Activated CD4-positive, alpha-beta T cell treated with anti-CD3 and anti-CD28 coated beads for 36 hours (primary cell): ENCODE measurements at regions of chr17 and their contacts with region 1.

Region 1: GRCh38 chr17:39605492-39606433 is 2.0 kb downstream of the NEUROD2 start:
- DNase-seq: peak; percentile 49
- ATAC-seq: no peak
- H3K4me3 Mint-ChIP-seq: no peak overlapping the region
- H3K27ac Mint-ChIP-seq: no peak overlapping the region
- H3K4me1 Mint-ChIP-seq: peaks cover 21% of the 10 kb centered on the region
- H3K27me3 Mint-ChIP-seq: peaks cover 61% of the 10 kb centered on the region

Region 2: GRCh38 chr17:39538866-39539265 is 66.9 kb before region 1 on chr17:
- CTCF ChIA-PET with region 1: no interaction called
- POLR2A ChIA-PET with region 1: no interaction called
- intact Hi-C with region 1: no loop called
- DNase-seq: no peak
- ATAC-seq: peak; percentile 39
- H3K4me3 Mint-ChIP-seq: no peak overlapping the region
- H3K27ac Mint-ChIP-seq: no peak overlapping the region
- H3K4me1 Mint-ChIP-seq: peaks cover 13% of the 10 kb centered on the region
- H3K27me3 Mint-ChIP-seq: no peaks in the 10 kb centered on the region

Region 3: DNA sequence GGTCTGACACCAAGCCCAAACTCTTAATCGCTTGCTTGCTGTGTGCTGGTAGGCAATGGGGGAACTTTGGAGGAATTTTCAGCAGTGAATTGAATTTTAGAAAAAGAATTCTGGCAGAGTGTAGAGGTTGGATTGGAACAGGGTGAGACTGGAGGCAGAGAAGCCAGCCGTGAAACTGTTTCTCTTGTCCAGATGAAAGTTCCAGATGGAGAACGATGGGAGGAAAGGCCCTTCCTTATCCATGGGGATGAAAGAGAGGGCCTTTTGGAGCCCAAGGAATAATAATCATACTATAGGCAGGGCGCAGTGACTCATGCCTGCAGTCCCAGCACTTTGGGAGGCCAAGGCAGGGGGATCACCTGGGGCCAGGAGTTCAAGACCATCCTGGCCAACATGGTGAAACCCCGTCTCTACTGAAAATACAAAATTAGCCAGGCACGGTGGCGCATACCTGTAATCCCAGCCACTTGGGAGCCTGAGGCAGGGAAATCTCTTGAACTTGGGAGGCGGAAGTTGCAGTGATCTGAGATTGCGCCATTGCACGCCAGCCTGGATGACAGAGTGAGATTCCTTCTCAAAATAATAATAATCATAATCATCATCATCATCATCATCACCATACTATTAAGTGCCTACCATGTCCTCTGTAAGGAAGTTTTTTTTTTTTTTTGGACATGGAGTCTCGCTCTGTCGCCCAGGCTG is 23.9 kb before region 1 on chr17:
- CTCF ChIA-PET with region 1: interaction called, 5 read pairs
- POLR2A ChIA-PET with region 1: interaction called, 12 read pairs
- intact Hi-C with region 1: no loop called
- DNase-seq: no peak
- ATAC-seq: no peak
- H3K4me3 Mint-ChIP-seq: no peak overlapping the region
- H3K27ac Mint-ChIP-seq: no peak overlapping the region
- H3K4me1 Mint-ChIP-seq: no peaks in the 10 kb centered on the region
- H3K27me3 Mint-ChIP-seq: no peaks in the 10 kb centered on the region